ENCODE measurements at regions of chr1 and their contacts with region 1.

Region 1: DNA sequence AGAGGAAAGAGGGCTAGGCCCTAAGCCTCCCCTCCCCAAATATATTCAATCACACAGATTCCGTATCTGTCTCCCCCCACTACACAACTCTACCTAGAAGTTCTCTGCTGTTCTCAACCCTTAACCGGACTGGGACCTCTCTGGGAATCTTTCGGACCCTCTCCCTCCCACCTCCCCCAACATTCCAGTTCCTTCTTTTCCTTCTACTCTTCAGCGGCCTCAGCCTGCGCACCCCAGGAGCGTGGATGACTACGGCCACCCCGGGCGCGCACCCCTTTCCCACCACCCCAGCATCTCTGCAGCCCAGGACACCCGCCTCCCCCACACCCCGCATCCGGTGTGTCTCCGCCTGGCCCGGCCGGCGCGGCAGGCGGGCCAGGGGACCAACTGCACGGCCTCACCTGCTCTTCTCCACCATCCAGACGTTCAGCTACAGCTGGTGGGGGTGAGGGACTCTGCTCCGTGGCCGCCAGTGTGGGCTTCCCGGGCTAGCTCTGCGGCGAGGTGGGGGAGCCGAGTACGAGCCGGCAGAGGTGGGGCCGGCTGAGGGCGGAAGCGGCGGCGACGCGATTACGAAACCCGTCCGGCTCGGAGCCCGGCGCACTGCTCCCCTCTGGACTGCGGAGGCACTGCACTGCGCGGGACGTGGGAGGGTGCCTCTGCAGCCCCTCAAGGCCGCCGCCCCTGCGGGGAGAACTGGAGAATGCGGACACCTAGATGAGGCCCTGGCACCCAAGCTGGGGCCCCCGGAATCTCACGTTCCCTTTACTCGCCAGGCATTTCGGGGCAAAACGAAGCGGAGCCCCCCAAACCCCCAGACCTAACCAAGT is at the start of gene CDC42SE1:
- DNase-seq: peak; percentile 96
- H3K4me3 Mint-ChIP-seq: peak within 1 kb of the TSS; percentile 99
- H3K27ac Mint-ChIP-seq: peak within 1 kb of the TSS; percentile 99
- H3K4me1 Mint-ChIP-seq: peaks cover 63% of the 10 kb centered on the region
- H3K27me3 Mint-ChIP-seq: no peaks in the 10 kb centered on the region
- total RNA-seq, gene CDC42SE1: 189 and 190 TPM in 2 replicates

Region 2: GRCh38 chr1:150813058-150813707 is 246.1 kb before region 1 on chr1:
- intact Hi-C with region 1: no loop called
- DNase-seq: peak; percentile 64
- H3K4me3 Mint-ChIP-seq: no peak overlapping the region
- H3K27ac Mint-ChIP-seq: no peak overlapping the region
- H3K4me1 Mint-ChIP-seq: peaks cover 1% of the 10 kb centered on the region
- H3K27me3 Mint-ChIP-seq: no peaks in the 10 kb centered on the region

Region 3: DNA sequence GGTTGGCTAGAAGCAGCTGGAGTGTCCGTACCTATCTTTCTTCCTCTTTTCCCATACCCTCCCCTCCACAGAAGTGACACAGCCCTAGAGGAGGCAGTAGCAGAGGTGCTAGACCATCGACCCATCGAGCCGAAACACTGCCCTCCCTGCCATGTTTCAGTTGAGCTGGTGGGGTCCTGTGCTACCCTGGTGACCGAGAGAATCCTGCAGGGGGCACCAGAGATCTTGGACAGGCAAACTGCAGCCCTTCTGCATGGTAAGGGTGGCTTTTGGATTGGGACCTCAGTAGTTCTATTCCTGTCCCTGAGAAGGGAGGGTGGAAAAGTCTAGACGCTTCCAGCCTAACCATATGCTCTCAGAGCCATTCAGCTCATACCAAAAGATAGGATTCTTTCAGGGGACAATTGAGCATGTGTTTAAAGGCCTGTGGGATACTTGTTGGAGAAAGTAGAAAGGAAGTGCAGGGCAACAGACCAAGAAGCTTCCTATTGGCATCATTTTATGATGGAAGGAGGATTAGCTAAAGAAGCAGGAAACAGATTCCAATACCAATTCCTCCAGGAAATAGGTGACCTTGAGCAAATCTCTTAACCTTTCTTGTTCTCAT is 34.6 kb before region 1 on chr1:
- intact Hi-C with region 1: loop called (anchors 5 kb)
- DNase-seq: peak; percentile 95
- H3K4me3 Mint-ChIP-seq: peak overlapping the region; percentile 30
- H3K27ac Mint-ChIP-seq: peak overlapping the region; percentile 59
- H3K4me1 Mint-ChIP-seq: peaks cover 7% of the 10 kb centered on the region
- H3K27me3 Mint-ChIP-seq: no peaks in the 10 kb centered on the region

Region 4: DNA sequence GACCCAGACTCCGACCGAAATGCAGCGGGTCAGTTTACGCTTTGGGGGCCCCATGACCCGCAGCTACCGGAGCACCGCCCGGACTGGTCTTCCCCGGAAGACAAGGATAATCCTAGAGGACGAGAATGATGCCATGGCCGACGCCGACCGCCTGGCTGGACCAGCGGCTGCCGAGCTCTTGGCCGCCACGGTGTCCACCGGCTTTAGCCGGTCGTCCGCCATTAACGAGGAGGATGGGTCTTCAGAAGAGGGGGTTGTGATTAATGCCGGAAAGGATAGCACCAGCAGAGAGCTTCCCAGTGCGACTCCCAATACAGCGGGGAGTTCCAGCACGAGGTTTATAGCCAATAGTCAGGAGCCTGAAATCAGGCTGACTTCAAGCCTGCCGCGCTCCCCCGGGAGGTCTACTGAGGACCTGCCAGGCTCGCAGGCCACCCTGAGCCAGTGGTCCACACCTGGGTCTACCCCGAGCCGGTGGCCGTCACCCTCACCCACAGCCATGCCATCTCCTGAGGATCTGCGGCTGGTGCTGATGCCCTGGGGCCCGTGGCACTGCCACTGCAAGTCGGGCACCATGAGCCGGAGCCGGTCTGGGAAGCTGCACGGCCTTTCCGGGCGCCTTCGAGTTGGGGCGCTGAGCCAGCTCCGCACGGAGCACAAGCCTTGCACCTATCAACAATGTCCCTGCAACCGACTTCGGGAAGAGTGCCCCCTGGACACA is 11.2 kb before region 1 on chr1:
- intact Hi-C with region 1: loop called (anchors 1 kb)
- DNase-seq: peak; percentile 86
- H3K4me3 Mint-ChIP-seq: peak overlapping the region; percentile 93
- H3K27ac Mint-ChIP-seq: peak overlapping the region; percentile 84
- H3K4me1 Mint-ChIP-seq: peaks cover 45% of the 10 kb centered on the region
- H3K27me3 Mint-ChIP-seq: no peaks in the 10 kb centered on the region